ENCODE measurements at regions of chr6 and their contacts with region 1.

Region 1: GRCh38 chr6:111724505-111724904 is 118.8 kb upstream of the TRAF3IP2 start:
- DNase-seq: peak; percentile 33
- H3K4me3 Mint-ChIP-seq: peak overlapping the region; percentile 0
- H3K27ac Mint-ChIP-seq: peak overlapping the region; percentile 77
- H3K4me1 Mint-ChIP-seq: peaks cover 81% of the 10 kb centered on the region
- H3K27me3 Mint-ChIP-seq: no peaks in the 10 kb centered on the region

Region 2: DNA sequence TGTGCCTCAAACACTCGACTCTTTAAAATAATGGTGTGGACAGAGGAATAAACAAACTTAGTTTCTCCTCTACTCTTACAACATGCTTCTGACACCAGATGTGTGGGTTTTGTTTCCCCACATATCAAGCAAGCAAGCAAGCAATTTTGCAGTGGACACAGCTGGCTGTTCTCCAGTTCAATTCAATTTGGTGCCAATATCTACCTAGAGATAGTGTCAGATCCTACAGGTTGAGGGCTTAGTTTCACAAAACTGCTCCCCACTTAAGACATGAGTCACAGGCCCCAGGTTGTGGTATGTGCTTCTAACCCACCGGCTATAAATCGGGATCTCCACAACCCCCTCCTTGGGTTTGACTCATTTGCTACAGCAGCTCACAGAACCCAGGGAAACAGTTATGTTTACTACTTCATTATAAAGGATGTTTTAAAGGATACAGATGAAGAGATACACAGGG is 12.6 kb after region 1 on chr6:
- CTCF ChIA-PET with region 1: interaction called, 24 read pairs
- intact Hi-C with region 1: loop called (anchors 1 kb)
- DNase-seq: no peak
- H3K4me3 Mint-ChIP-seq: no peak overlapping the region
- H3K27ac Mint-ChIP-seq: peak overlapping the region; percentile 69
- H3K4me1 Mint-ChIP-seq: peaks cover 88% of the 10 kb centered on the region
- H3K27me3 Mint-ChIP-seq: no peaks in the 10 kb centered on the region

Region 3: DNA sequence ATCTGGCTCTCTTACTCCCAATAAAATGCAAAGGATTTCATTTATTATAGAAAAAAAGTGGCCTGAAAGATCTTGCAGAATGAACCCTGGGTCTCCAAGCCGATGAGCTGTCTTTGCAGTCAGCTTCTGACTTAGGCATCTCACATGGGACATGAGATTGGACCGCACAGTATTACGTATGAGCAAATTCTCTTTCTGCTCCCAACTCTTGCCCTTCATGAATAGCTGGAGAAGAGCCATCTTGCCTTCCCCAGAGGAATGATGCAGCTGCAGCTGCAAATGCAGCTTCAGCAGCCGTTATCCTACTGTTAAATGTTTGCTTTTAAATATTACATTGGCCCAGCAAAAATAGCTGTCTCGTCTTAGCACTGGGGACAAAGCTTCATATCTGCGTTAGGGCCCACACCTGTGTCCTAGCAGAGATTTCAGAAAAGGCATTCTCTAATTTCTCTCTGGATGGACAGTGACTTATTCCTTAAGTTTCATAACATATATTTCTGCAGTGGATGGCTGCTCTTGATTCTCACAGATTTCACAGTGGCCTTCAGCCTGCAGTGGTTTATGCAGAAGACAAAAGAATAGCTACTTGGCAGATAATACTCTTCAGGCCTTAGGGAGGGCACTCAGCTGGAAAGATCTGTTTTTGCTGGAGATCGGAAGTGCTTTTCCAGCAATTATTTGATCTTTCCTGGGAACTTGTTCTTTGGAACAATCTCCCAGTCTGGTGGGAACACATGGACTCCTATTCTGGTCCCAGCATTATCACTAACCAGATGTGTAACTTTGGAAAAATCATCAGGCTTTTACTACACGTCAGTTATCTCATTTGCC is 19.6 kb after region 1 on chr6:
- CTCF ChIA-PET with region 1: interaction called, 6 read pairs
- intact Hi-C with region 1: loop called (anchors 2 kb)
- DNase-seq: no peak
- H3K4me3 Mint-ChIP-seq: no peak overlapping the region
- H3K27ac Mint-ChIP-seq: no peak overlapping the region
- H3K4me1 Mint-ChIP-seq: peaks cover 86% of the 10 kb centered on the region
- H3K27me3 Mint-ChIP-seq: no peaks in the 10 kb centered on the region

Measured in activated naive CD4-positive, alpha-beta T cell treated with anti-CD3 and anti-CD28 coated beads for 36 hours (primary cell).